ENCODE measurements at regions of chr1 and their contacts with region 1.

Region 1: GRCh38 chr1:79497193-79497773 is 490.8 kb upstream of the ADGRL4 start:
- DNase-seq: peak; percentile 47
- ATAC-seq: peak; percentile 71; the same call in 1 of the 2 replicates
- H3K4me3 ChIP-seq: no peak overlapping the region
- H3K27ac ChIP-seq: no peak overlapping the region
- H3K4me1 ChIP-seq: no peaks in the 10 kb centered on the region
- H3K27me3 ChIP-seq: no peaks in the 10 kb centered on the region
- CTCF ChIP-seq: peak; percentile 90
- POLR2A ChIP-seq: no peak
- RAD21 ChIP-seq: peak; percentile 92

Region 2: GRCh38 chr1:79899914-79900313 is 402.6 kb after region 1 on chr1:
- CTCF ChIA-PET with region 1: no interaction called
- POLR2A ChIA-PET with region 1: no interaction called
- dilution Hi-C with region 1: no loop called
- in situ Hi-C with region 1: no loop called
- intact Hi-C with region 1: loop called (anchors 5 kb)
- DNase-seq: peak; percentile 100
- ATAC-seq: peak; percentile 93
- H3K4me3 ChIP-seq: no peak overlapping the region
- H3K27ac ChIP-seq: peak overlapping the region; percentile 51
- H3K4me1 ChIP-seq: peaks cover 5% of the 10 kb centered on the region
- H3K27me3 ChIP-seq: no peaks in the 10 kb centered on the region
- CTCF ChIP-seq: 0 out of 2 replicates have a peak, but pooled peaks have one; percentile 24
- POLR2A ChIP-seq: no peak
- RAD21 ChIP-seq: peak; percentile 46

Region 3: GRCh38 chr1:80218112-80218511 is 720.8 kb after region 1 on chr1:
- CTCF ChIA-PET with region 1: no interaction called
- POLR2A ChIA-PET with region 1: no interaction called
- dilution Hi-C with region 1: no loop called
- in situ Hi-C with region 1: no loop called
- intact Hi-C with region 1: loop called (anchors 1 kb)
- DNase-seq: peak; percentile 59
- ATAC-seq: peak; percentile 85
- H3K4me3 ChIP-seq: no peak overlapping the region
- H3K27ac ChIP-seq: no peak overlapping the region
- H3K4me1 ChIP-seq: no peaks in the 10 kb centered on the region
- H3K27me3 ChIP-seq: no peaks in the 10 kb centered on the region
- CTCF ChIP-seq: peak; percentile 58
- POLR2A ChIP-seq: no peak
- RAD21 ChIP-seq: peak; percentile 57

Measured in IMR-90 (cell line).